ENCODE measurements at regions of chr1 and their contacts with region 1.

Region 1: DNA sequence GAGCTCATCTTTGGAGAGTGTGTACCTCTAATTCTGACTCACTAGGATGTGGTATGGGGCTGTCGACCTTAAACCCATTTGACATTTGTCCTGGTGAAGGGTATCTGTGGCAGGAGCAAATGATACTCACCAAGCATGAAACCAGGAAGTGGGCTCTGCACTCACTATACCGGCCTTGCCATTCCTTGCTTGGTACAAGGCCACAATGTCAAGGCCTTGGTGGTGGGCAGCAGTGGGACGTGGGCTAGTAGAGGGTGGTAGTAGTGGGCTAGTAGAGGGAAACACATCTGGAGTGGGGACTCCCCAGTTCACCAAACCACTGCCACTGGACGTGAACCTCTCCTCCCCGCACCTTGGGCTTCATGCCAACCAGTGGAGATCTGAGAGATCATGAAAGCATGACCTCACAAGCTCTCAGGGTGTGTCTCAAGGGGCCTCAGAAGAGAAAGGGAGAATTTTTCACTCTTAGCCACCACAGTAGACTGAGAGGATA is 11.5 kb downstream of the TNFSF4 start:
- DNase-seq: no peak
- ATAC-seq: no peak
- H3K4me3 ChIP-seq: no peak overlapping the region
- H3K27ac ChIP-seq: no peak overlapping the region
- H3K4me1 ChIP-seq: peaks cover 0 to 5% (median 0%) of the 10 kb centered on the region in 3 donors
- H3K27me3 ChIP-seq: no peaks in the 10 kb centered on the region
- CTCF ChIP-seq: no peak

Region 2: DNA sequence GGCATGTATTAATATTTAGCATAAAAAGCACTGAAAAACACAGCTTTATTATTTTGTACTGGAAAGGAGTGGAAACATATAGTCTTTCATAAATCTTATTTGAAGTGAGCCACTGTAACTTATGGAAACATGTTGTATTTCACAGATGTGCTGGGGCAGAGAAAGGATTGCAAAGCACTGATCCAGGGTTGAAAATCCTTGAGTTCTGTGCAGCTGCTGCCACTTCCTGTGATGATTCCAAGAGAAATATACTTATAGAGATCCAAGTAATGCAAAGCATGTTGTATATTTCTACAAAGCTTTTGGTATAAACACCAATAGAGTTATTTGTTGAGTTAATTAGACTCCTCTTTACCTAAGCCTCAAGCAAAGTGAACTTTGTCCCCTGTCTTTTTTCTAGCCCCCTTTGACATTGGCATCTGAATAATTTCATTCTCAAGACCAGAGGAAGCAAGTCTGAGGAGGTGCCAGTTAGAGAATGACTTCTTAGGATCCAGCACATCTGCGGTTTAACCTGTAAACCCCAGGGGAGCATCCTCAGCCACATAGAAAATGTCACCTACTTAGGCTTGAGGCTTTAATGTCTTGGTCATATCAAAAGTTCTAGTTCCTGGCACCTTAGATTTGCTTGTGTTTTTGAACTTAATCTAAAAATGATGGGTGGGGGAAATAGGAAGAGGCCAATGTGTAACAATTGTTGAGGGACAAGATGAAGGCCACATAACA is 363.5 kb before region 1 on chr1:
- intact Hi-C with region 1: loop called in 1 of 3 experiments (anchors 5 kb)
- DNase-seq: no peak
- ATAC-seq: no peak
- H3K4me3 ChIP-seq: no peak overlapping the region
- H3K27ac ChIP-seq: no peak overlapping the region
- H3K4me1 ChIP-seq: no peaks in the 10 kb centered on the region
- H3K27me3 ChIP-seq: no peaks in the 10 kb centered on the region
- CTCF ChIP-seq: no peak

Region 3: DNA sequence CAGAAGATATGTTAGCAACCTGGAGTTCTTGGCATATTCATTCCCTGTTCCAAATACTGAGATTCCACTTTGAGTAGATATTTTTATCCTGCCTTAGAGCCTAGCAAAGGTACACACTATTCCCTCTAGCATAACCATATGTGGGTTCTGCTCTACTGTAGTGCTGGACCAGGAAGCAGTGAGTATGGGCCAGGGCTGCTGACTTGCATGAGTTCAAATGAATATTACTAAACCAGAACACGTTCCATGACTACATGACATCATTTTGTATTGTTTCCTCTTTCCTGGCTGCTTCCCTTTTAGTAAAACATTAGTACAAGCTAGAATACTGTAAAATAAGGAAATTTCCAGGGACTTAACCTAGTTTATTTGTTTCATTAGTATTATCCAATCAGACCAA is 186.0 kb before region 1 on chr1:
- intact Hi-C with region 1: no loop called
- DNase-seq: peak in 1 of 6 donors; percentile 14
- ATAC-seq: peak in 2 of 4 donors; percentile 58 to 70
- H3K4me3 ChIP-seq: no peak overlapping the region
- H3K27ac ChIP-seq: no peak overlapping the region
- H3K4me1 ChIP-seq: no peaks in the 10 kb centered on the region
- H3K27me3 ChIP-seq: no peaks in the 10 kb centered on the region
- CTCF ChIP-seq: no peak